MCF 10A (cell line): ENCODE measurements at regions of chr6 and their contacts with region 1.

Region 1: GRCh38 chr6:3251462-3252314 is 7.1 kb upstream of the PSMG4 start:
- DNase-seq: peak; percentile 84
- H3K4me3 Mint-ChIP-seq: peak overlapping the region; percentile 43
- H3K27ac Mint-ChIP-seq: peak overlapping the region; percentile 54
- H3K4me1 Mint-ChIP-seq: peaks cover 24% of the 10 kb centered on the region
- H3K27me3 Mint-ChIP-seq: no peaks in the 10 kb centered on the region
- CTCF ChIP-seq: peak; percentile 84

Region 2: DNA sequence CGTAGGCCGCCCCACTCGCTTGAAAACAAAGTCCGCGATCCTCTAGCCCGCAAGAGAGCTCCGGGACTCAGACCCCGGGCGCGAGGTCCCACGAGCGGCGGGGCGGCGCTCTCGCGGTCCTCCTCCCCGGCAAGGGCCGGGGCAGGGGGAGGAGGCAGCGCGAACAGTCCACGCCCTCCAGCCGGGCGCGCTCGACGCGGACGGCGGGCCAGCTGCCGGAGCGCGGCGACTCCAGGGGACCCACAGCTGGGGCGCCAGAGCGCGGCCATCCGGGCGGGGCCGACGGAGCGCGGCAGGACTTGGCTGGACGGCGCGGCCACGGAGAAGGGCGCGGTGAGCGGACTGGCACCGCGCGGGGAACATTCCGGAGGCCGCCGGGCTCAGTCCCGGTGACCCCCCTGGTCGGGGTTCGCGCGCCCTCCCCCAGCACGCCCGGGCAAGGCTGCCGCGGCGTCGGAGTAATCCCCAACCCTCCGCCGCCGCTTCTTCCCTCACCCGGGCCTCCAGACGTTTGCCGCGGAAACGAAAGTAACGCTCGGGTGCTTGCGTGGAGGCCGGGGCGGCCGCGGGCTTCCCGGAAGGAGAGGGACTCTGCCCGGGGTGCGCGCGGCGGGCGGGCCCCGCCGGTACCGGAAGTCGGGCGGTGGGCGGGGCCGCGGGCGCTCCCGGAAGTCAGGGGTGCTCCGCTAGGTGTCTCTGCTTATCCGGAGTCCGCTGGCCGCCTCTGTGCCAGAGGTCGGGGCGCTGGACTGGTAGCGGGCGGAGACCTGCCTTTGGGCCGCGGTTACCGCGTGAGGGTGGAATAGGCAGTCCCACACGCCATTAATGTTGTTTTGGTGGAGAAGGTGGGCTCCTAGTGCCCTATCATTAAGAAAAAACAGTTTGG is 183.1 kb before region 1 on chr6 and contains the start of gene RIPK1:
- CTCF ChIA-PET with region 1: interaction called, 4 read pairs
- POLR2A ChIA-PET with region 1: interaction called, 15 read pairs
- intact Hi-C with region 1: no loop called
- DNase-seq: peak; percentile 88
- H3K4me3 Mint-ChIP-seq: peak within 1 kb of the TSS; percentile 93
- H3K27ac Mint-ChIP-seq: peak within 1 kb of the TSS; percentile 93
- H3K4me1 Mint-ChIP-seq: peaks cover 12% of the 10 kb centered on the region
- H3K27me3 Mint-ChIP-seq: no peaks in the 10 kb centered on the region
- CTCF ChIP-seq: no peak
- total RNA-seq, gene RIPK1: 16.8 and 21.2 TPM in 2 replicates

Region 3: GRCh38 chr6:3118353-3119039 is 133.2 kb before region 1 on chr6 and contains the start of gene BPHL:
- CTCF ChIA-PET with region 1: interaction called, 64 read pairs
- POLR2A ChIA-PET with region 1: interaction called, 9 read pairs
- intact Hi-C with region 1: no loop called
- DNase-seq: peak; percentile 92
- H3K4me3 Mint-ChIP-seq: peak within 1 kb of the TSS; percentile 80
- H3K27ac Mint-ChIP-seq: peak within 1 kb of the TSS; percentile 98
- H3K4me1 Mint-ChIP-seq: peaks cover 14% of the 10 kb centered on the region
- H3K27me3 Mint-ChIP-seq: no peaks in the 10 kb centered on the region
- CTCF ChIP-seq: no peak
- total RNA-seq, gene BPHL: 13.2 and 17.5 TPM in 2 replicates

Region 4: GRCh38 chr6:3125815-3126214 is 125.9 kb before region 1 on chr6:
- CTCF ChIA-PET with region 1: interaction called, 64 read pairs
- POLR2A ChIA-PET with region 1: interaction called, 4 read pairs
- intact Hi-C with region 1: loop called (anchors 1 kb)
- DNase-seq: no peak
- H3K4me3 Mint-ChIP-seq: no peak overlapping the region
- H3K27ac Mint-ChIP-seq: no peak overlapping the region
- H3K4me1 Mint-ChIP-seq: no peaks in the 10 kb centered on the region
- H3K27me3 Mint-ChIP-seq: no peaks in the 10 kb centered on the region
- CTCF ChIP-seq: no peak

Region 5: DNA sequence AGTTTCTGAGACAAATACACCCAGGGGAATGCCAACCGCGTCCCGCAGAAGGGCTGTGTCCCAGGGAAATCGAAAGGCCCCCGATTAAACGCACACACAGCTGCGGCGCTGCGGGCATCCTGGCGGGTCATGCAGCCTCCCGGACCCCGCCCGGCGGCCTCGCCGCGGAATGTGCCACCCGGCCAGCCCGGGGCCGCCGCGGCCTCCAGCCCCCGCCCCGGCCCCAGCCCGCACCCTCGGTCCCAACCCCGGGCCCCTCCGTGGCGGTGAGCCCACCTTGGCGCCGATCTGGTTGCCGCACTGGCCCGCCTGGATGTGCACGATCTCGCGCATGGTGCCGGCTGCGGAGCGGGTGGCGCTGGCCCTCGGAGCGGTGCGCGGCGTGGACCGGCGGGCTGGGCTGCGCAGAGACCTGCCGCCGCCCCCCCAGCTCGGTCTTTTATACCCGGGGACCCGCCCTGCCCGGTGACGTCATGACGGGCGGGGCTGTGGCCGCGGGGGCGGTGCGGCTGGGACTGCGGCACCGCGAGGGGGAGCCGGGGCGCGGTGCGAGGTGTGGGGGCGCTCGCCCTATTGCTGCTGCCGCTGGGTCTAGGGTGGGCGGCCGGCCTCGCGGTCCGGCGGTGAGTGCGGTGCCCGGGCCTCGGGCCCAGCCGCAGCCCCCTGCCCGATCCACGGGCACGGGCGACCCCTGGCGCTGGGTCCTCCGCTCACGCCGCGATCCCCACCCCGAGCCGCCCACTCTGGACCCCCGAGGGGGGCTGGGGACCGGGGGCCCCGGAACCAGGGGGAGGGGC is 94.4 kb before region 1 on chr6 and contains the start of gene TUBB2A:
- CTCF ChIA-PET with region 1: interaction called, 5 read pairs
- POLR2A ChIA-PET with region 1: interaction called, 20 read pairs
- intact Hi-C with region 1: loop called (anchors 5 kb)
- DNase-seq: peak; percentile 71
- H3K4me3 Mint-ChIP-seq: peak within 1 kb of the TSS; percentile 72
- H3K27ac Mint-ChIP-seq: peak within 1 kb of the TSS; percentile 69
- H3K4me1 Mint-ChIP-seq: no peaks in the 10 kb centered on the region
- H3K27me3 Mint-ChIP-seq: no peaks in the 10 kb centered on the region
- CTCF ChIP-seq: peak; percentile 78
- total RNA-seq, gene TUBB2A: 13.3 and 17.8 TPM in 2 replicates

Region 6: GRCh38 chr6:3209114-3210023 is 42.3 kb before region 1 on chr6:
- CTCF ChIA-PET with region 1: interaction called, 17 read pairs
- POLR2A ChIA-PET with region 1: interaction called, 34 read pairs
- intact Hi-C with region 1: loop called (anchors 1 kb)
- DNase-seq: peak; percentile 99
- H3K4me3 Mint-ChIP-seq: peak overlapping the region; percentile 61
- H3K27ac Mint-ChIP-seq: peak overlapping the region; percentile 94
- H3K4me1 Mint-ChIP-seq: peaks cover 26% of the 10 kb centered on the region
- H3K27me3 Mint-ChIP-seq: no peaks in the 10 kb centered on the region
- CTCF ChIP-seq: no peak

Region 7: DNA sequence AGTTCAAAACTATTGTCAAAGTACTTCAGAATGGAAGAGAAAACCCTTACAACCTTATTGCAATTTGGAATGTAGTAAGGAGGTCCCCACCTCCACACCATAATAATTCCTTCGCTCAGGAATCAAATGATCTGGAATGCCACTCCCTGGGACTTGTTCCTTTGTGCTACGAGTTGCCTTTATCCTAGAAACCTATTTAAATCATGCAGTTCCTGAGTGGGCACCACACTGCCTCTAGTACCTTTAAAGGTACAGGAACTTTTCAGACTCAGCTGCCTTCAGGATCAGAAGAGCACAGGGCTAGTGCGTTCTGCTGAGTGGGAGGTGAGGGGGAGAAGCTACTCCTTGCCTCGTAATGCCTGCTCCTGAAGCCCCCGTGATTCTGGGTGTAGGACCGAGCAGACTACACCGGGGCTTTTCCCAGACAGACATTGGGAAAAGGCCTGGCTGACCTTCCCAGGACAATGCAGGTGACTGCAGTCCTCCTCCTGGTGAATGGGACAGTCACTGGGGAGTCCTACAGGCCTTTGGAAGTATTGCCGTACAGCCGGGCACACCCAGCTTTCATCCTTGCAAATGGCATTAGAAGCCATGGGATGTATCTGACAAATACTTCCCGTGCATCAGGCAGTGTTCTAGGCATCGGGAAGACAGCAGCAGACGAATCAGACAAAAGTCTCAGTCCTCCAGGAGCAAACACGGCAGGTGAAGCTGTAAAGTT is 12.4 kb before region 1 on chr6:
- CTCF ChIA-PET with region 1: interaction called, 14 read pairs
- POLR2A ChIA-PET with region 1: interaction called, 4 read pairs
- intact Hi-C with region 1: no loop called
- DNase-seq: no peak
- H3K4me3 Mint-ChIP-seq: no peak overlapping the region
- H3K27ac Mint-ChIP-seq: no peak overlapping the region
- H3K4me1 Mint-ChIP-seq: peaks cover 4% of the 10 kb centered on the region
- H3K27me3 Mint-ChIP-seq: peaks cover 4% of the 10 kb centered on the region
- CTCF ChIP-seq: no peak